HCT116 (cell line): ENCODE measurements at regions of chr19 and their contacts with region 1.

Region 1: GRCh38 chr19:56066152-56067023 is 54.7 kb downstream of the ZNF787 start:
- DNase-seq: peak; percentile 44
- ATAC-seq: peak; percentile 96
- H3K4me3 ChIP-seq: peak overlapping the region; percentile 30 to 46
- H3K27ac ChIP-seq: no peak overlapping the region
- H3K4me1 ChIP-seq: peaks cover 6 to 10% of the 10 kb centered on the region in 2 experiments
- H3K27me3 ChIP-seq: peaks cover 11% of the 10 kb centered on the region; the same call in 1 of the 2 replicates
- CTCF ChIP-seq: peak; percentile 70 to 91 (median 88)
- POLR2A ChIP-seq: no peak
- RAD21 ChIP-seq: peak; percentile 74

Region 2: DNA sequence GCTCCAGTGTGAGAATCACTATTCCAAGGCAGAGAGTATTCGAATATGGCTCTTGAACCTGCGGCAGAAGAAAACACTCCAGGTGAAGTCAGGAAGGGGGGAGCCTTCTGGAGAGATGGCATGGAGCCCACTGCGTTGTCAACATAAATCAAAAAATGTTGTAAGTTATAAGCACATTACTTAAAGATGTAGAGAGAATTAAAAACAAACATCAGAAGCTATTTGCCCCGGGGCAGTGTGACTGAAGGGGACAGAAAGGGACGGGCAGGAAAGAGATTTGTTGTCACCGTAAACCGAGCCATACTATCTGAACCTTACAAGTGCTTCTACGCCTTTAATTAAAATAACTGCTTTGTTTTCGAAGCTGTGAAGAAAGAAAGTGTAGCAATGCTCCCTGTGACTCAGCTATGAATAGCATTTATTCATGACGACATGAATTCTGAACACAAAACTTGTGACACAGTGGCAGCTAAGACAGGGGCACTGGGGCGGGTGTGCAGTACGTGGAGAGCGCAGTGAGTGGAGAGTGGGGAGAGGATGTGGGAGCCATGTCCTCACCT is 24.6 kb after region 1 on chr19:
- CTCF ChIA-PET with region 1: no interaction called
- POLR2A ChIA-PET with region 1: no interaction called
- RAD21 ChIA-PET with region 1: no interaction called
- intact Hi-C with region 1: no loop called
- DNase-seq: no peak
- ATAC-seq: no peak
- H3K4me3 ChIP-seq: no peak overlapping the region
- H3K27ac ChIP-seq: no peak overlapping the region
- H3K4me1 ChIP-seq: no peaks in the 10 kb centered on the region
- H3K27me3 ChIP-seq: no peaks in the 10 kb centered on the region
- CTCF ChIP-seq: no peak
- POLR2A ChIP-seq: no peak
- RAD21 ChIP-seq: no peak

Region 3: DNA sequence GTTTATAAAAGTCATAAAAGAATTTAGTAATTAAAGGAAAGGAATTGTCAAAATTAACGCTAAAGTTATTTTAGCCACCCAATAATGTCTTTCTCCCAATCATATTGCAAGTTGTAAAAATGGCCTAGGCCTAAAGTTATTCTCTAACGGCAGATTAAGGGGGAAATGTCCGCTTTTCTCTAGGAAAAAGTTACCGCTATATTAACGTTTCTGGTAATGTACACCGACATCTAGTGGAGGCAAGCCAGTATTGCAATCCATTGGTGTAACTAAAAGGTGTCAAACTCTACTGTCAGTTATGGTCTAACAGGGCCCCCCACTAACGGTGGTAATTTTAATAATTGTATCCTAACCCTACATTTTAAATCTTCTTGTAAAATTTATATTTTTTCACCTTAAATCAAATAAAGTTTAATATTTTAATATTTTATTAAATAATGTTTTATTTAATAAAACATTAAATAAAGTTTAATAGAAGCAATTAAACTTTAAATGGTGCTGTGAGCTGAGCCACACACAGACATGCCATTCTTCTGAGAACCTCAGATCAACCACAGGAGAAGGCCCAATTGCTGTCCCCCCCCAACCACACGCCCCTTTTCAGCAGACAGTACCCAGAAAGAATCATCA is 284.1 kb after region 1 on chr19:
- CTCF ChIA-PET with region 1: interaction called, 9 read pairs
- POLR2A ChIA-PET with region 1: no interaction called
- RAD21 ChIA-PET with region 1: no interaction called
- intact Hi-C with region 1: loop called (anchors 2 kb)
- DNase-seq: peak; percentile 24
- ATAC-seq: peak; percentile 67
- H3K4me3 ChIP-seq: no peak overlapping the region
- H3K27ac ChIP-seq: no peak overlapping the region
- H3K4me1 ChIP-seq: no peaks in the 10 kb centered on the region
- H3K27me3 ChIP-seq: no peaks in the 10 kb centered on the region
- CTCF ChIP-seq: peak; percentile 33 to 88 (median 76); a peak in 5 of 6 replicates
- POLR2A ChIP-seq: no peak
- RAD21 ChIP-seq: peak; percentile 57